WTC11 (cell line): ENCODE measurements at regions of chr22 and their contacts with region 1.

Region 1: GRCh38 chr22:43273902-43274484 is 69.2 kb downstream of the SCUBE1 start:
- DNase-seq: peak; percentile 70
- ATAC-seq: peak; percentile 60
- H3K4me3 Mint-ChIP-seq: no peak overlapping the region
- H3K27ac Mint-ChIP-seq: no peak overlapping the region
- H3K4me1 Mint-ChIP-seq: peaks cover 51% of the 10 kb centered on the region
- H3K27me3 Mint-ChIP-seq: no peaks in the 10 kb centered on the region
- CTCF ChIP-seq: peak; percentile 61; the same call in 1 of the 2 replicates

Region 2: GRCh38 chr22:43244402-43244801 is 29.6 kb before region 1 on chr22:
- CTCF ChIA-PET with region 1: interaction called, 14 read pairs
- POLR2A ChIA-PET with region 1: no interaction called
- DNase-seq: no peak
- ATAC-seq: no peak
- H3K4me3 Mint-ChIP-seq: no peak overlapping the region
- H3K27ac Mint-ChIP-seq: no peak overlapping the region
- H3K4me1 Mint-ChIP-seq: 0 out of 2 replicates have a peak, but pooled peaks cover 2% of the 10 kb centered on the region
- H3K27me3 Mint-ChIP-seq: no peaks in the 10 kb centered on the region
- CTCF ChIP-seq: no peak

Region 3: DNA sequence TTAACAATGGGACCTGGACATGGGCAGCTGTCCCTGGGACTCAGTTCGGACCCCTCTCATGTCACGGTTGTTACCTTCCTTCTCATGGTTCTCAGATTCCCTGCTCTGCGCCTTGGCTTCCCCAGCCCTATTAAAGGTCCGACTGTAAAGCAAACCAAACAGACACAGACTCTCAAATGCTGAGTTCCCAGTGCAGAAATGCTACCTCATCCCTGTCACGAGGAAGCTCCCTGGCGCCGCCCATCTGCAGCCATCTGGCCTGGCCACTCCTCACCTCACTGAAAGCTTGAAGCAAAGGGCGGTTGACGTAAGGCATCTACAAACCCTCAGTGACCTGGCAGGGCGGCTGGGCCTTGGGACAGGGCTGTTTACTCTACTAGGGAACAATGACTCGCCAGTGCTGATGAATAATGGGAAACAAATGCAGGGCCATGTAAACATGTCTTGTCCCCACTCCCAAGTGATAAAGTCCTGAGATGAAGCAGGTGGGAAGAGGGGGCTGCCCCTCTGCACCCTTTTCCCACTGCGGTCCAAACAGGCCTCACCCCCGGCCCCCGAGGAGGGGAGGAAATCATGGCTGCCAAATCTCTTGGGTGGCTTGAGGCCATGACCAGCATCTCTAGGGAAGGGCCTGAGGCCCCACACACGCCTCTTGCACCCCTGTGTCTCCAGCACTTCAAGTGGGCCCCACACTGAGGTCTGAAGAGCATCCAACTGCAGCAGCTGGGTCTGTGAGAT is 19.8 kb after region 1 on chr22:
- CTCF ChIA-PET with region 1: interaction called, 31 read pairs
- POLR2A ChIA-PET with region 1: no interaction called
- DNase-seq: no peak
- ATAC-seq: no peak; the same call in 1 of the 2 replicates
- H3K4me3 Mint-ChIP-seq: no peak overlapping the region
- H3K27ac Mint-ChIP-seq: no peak overlapping the region
- H3K4me1 Mint-ChIP-seq: 0 out of 2 replicates have a peak, but pooled peaks cover 2% of the 10 kb centered on the region
- H3K27me3 Mint-ChIP-seq: no peaks in the 10 kb centered on the region
- CTCF ChIP-seq: no peak

Region 4: GRCh38 chr22:43338766-43339345 is 64.9 kb after region 1 on chr22:
- CTCF ChIA-PET with region 1: interaction called, 486 read pairs
- POLR2A ChIA-PET with region 1: interaction called, 3 read pairs
- DNase-seq: no peak
- ATAC-seq: no peak
- H3K4me3 Mint-ChIP-seq: no peak overlapping the region
- H3K27ac Mint-ChIP-seq: no peak overlapping the region
- H3K4me1 Mint-ChIP-seq: peaks cover 6% of the 10 kb centered on the region; the same call in 1 of the 2 replicates
- H3K27me3 Mint-ChIP-seq: peaks cover 27% of the 10 kb centered on the region
- CTCF ChIP-seq: no peak

Region 5: GRCh38 chr22:43370036-43370435 is 96.0 kb after region 1 on chr22:
- CTCF ChIA-PET with region 1: interaction called, 17 read pairs
- POLR2A ChIA-PET with region 1: no interaction called
- DNase-seq: peak; percentile 62
- ATAC-seq: peak; percentile 96
- H3K4me3 Mint-ChIP-seq: peak overlapping the region; percentile 24; the same call in 1 of the 2 replicates
- H3K27ac Mint-ChIP-seq: no peak overlapping the region
- H3K4me1 Mint-ChIP-seq: peaks cover 12% of the 10 kb centered on the region
- H3K27me3 Mint-ChIP-seq: peaks cover 3% of the 10 kb centered on the region; the same call in 1 of the 2 replicates
- CTCF ChIP-seq: no peak

Region 6: DNA sequence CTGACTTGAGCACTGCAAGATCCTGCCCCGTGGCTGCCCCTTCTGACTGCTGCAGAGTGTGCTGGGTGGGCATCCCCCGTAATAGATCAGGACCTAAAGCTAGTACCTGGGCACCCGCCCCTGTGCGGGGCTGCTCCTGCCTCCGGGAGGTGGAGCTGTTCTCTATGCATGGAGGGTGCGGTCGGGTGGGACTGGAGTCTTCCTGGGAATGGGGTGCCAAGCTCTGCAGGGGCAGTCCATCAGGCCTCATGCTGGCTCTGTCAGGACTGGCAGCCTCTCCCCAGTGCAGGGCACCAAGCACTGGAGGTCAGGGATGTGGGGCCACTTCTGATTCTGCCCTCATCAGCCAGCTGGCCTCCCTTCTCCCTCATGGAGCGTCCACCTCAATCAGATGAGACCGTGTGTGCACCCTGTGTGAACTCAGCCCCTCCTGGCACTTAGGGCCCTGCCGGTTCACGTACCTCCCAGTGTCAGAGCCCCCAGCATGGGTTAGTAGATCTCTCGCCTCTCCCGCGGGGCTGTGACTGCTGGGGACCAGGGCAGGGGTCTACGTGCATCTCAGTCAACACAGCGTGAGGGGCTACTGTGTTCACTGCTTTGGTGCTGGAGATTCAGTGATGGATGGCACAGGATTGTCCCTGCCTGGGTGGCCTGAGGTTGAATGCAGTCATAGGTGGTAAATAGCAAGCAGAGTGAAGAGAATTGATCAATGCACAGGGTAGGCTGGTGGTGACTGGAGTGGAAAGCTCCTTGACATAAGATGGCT is 168.6 kb after region 1 on chr22:
- CTCF ChIA-PET with region 1: no interaction called
- POLR2A ChIA-PET with region 1: no interaction called
- DNase-seq: no peak
- ATAC-seq: no peak
- H3K4me3 Mint-ChIP-seq: no peak overlapping the region
- H3K27ac Mint-ChIP-seq: no peak overlapping the region
- H3K4me1 Mint-ChIP-seq: peaks cover 13% of the 10 kb centered on the region
- H3K27me3 Mint-ChIP-seq: no peaks in the 10 kb centered on the region; the same call in 1 of the 2 replicates
- CTCF ChIP-seq: no peak